Upper lobe of right lung (tissue), 1 donor: ENCODE measurements at regions of chr3 and their contacts with region 1.

Region 1: GRCh38 chr3:41893977-41894376 is 67.9 kb downstream of the ULK4 start:
- DNase-seq: no peak
- ATAC-seq: peak; percentile 46
- H3K4me3 ChIP-seq: no peak overlapping the region
- H3K27ac ChIP-seq: no peak overlapping the region
- H3K4me1 ChIP-seq: no peaks in the 10 kb centered on the region
- H3K27me3 ChIP-seq: no peaks in the 10 kb centered on the region
- CTCF ChIP-seq: peak; percentile 62

Region 2: GRCh38 chr3:41640076-41640475 is 253.9 kb before region 1 on chr3:
- intact Hi-C with region 1: no loop called
- DNase-seq: no peak
- ATAC-seq: no peak
- H3K4me3 ChIP-seq: no peak overlapping the region
- H3K27ac ChIP-seq: no peak overlapping the region
- H3K4me1 ChIP-seq: no peaks in the 10 kb centered on the region
- H3K27me3 ChIP-seq: no peaks in the 10 kb centered on the region
- CTCF ChIP-seq: no peak

Region 3: GRCh38 chr3:41881233-41881821 is 12.7 kb before region 1 on chr3:
- intact Hi-C with region 1: no loop called
- DNase-seq: no peak
- ATAC-seq: no peak
- H3K4me3 ChIP-seq: no peak overlapping the region
- H3K27ac ChIP-seq: no peak overlapping the region
- H3K4me1 ChIP-seq: no peaks in the 10 kb centered on the region
- H3K27me3 ChIP-seq: no peaks in the 10 kb centered on the region
- CTCF ChIP-seq: peak; percentile 69

Region 4: DNA sequence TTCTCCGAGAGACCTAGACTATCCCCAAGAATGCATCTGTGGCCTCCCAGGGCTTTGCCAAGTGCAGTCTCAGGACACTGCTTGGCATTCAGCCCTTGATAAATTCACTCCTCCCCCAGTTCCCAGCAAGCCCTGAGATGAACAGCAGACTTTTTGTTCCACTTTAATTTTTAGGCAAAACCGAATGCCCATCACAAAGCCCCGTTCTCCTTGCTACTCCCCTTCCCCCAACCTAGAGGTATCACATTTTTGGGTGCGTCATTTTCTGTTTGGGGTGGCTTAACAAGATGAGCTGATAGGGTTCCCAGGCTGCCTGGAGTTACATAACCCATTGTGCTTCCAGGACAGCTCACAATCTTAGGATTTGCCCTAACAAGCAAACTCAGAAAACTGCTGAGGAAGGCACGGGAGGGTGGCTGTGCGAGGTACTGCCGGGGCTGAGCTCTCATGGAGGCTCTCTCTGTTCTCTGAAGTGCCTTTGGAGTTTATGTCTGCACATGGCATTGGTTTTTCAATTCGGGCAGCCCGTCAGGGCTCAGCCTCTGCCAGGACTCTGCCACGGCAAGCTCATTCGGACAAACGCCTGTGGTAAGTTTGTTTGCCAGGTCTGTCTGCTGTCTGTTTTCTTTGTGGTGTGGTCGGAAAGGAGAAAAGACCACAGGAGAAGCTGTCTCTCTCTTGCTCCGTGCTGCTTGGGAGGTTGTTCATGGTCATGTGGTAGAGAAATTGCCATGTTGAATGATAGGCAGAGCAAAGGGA is 197.2 kb after region 1 on chr3 and contains the start of gene TRAK1:
- intact Hi-C with region 1: loop called (anchors 10 kb)
- DNase-seq: no peak
- ATAC-seq: no peak
- H3K4me3 ChIP-seq: peak within 1 kb of the TSS; percentile 5
- H3K27ac ChIP-seq: peak within 1 kb of the TSS; percentile 49
- H3K4me1 ChIP-seq: no peaks in the 10 kb centered on the region
- H3K27me3 ChIP-seq: no peaks in the 10 kb centered on the region
- CTCF ChIP-seq: no peak
- total RNA-seq, gene TRAK1: 49.6 TPM

Region 5: GRCh38 chr3:42190701-42191462 is 296.9 kb after region 1 on chr3:
- intact Hi-C with region 1: loop called (anchors 10 kb)
- DNase-seq: no peak
- ATAC-seq: peak; percentile 80
- H3K4me3 ChIP-seq: no peak overlapping the region
- H3K27ac ChIP-seq: no peak overlapping the region
- H3K4me1 ChIP-seq: no peaks in the 10 kb centered on the region
- H3K27me3 ChIP-seq: no peaks in the 10 kb centered on the region
- CTCF ChIP-seq: peak; percentile 86